HepG2 (cell line): ENCODE measurements at regions of chr3 and their contacts with region 1.

Region 1: DNA sequence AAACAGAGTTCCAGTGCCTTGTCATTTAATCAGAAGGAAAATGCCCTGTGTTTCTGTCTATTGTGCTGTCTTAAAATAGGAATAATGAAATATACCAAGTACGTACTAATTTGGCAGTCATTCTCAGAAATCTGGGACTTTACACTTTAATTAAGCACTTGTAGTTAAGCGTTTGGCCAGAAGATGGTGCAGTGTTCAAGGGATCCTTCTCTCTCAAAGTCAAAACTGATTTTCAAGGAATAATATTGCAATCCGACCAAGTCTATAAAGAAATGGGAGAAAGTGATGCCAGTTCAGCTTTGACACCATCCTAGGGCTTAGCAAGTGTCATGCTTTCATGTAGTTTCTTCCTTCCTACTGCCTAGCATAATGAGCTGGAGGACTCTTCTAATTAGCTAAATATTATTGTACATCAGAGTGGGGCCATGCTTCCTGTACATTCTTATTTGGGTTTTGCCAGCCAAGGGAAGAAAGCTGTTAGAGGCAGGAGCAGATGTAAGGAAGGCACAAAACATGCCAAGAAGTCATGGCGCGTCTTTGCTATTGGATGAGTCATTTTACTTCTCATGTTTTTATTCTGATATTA is 64.8 kb downstream of the SAMMSON start:
- DNase-seq: peak; percentile 27
- ATAC-seq: no peak
- H3K4me3 ChIP-seq: no peak overlapping the region
- H3K27ac ChIP-seq: no peak overlapping the region
- H3K4me1 ChIP-seq: no peaks in the 10 kb centered on the region
- H3K27me3 ChIP-seq: no peaks in the 10 kb centered on the region
- CTCF ChIP-seq: peak; percentile 71
- EP300 ChIP-seq: no peak
- POLR2A ChIP-seq: no peak
- RAD21 ChIP-seq: peak; percentile 45; the same call in 1 of the 2 replicates

Region 2: GRCh38 chr3:70108072-70108471 is 43.8 kb after region 1 on chr3:
- CTCF ChIA-PET with region 1: no interaction called
- POLR2A ChIA-PET with region 1: no interaction called
- in situ Hi-C with region 1: no loop called
- intact Hi-C with region 1: loop called (anchors 1 kb)
- DNase-seq: peak; percentile 18
- ATAC-seq: peak; percentile 54
- H3K4me3 ChIP-seq: no peak overlapping the region
- H3K27ac ChIP-seq: no peak overlapping the region
- H3K4me1 ChIP-seq: no peaks in the 10 kb centered on the region
- H3K27me3 ChIP-seq: no peaks in the 10 kb centered on the region
- CTCF ChIP-seq: peak; percentile 41
- EP300 ChIP-seq: no peak
- POLR2A ChIP-seq: no peak
- RAD21 ChIP-seq: no peak

Region 3: DNA sequence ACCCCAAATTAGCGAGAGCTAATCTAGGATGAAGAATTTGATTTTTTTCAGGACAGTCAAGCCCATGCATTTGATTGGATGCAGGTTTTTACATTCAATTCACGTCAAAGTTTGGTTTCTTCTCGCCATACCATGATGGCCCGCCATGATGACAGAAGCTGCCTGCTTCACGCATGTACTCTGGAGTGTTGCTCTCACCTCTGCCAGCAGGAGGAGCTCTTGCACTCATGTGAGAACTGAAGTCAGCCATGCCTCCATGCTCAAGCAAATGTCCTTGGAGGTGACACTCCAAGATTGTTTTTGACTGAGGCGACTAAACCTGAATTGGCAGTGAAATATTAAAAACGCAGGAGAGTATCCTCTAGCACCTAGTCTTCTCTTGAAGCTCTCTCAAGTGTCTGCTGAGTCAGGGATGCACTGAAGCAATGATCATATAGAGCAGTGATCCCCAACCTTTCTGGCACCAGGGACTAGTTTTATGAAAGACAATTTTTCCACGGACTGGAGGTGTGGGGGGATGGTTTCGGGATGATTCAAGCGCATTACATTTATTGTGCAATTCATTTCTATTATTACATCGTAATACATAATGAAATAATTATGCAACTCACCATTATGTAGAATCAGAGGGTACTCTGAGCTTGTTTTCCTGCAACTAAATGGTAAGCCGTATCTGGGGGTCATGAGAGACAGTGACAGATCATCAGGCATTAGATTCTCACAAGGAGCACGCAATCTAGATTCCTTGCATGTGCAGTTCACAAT is 56.3 kb after region 1 on chr3:
- CTCF ChIA-PET with region 1: no interaction called
- POLR2A ChIA-PET with region 1: no interaction called
- in situ Hi-C with region 1: no loop called
- intact Hi-C with region 1: loop called (anchors 5 kb)
- DNase-seq: peak; percentile 65
- ATAC-seq: peak; percentile 96
- H3K4me3 ChIP-seq: no peak overlapping the region
- H3K27ac ChIP-seq: no peak overlapping the region
- H3K4me1 ChIP-seq: no peaks in the 10 kb centered on the region
- H3K27me3 ChIP-seq: no peaks in the 10 kb centered on the region; a peak in 1 of 5 replicates
- CTCF ChIP-seq: peak; percentile 86
- EP300 ChIP-seq: no peak
- POLR2A ChIP-seq: no peak
- RAD21 ChIP-seq: 0 out of 2 replicates have a peak, but pooled peaks have one; percentile 35

Region 4: DNA sequence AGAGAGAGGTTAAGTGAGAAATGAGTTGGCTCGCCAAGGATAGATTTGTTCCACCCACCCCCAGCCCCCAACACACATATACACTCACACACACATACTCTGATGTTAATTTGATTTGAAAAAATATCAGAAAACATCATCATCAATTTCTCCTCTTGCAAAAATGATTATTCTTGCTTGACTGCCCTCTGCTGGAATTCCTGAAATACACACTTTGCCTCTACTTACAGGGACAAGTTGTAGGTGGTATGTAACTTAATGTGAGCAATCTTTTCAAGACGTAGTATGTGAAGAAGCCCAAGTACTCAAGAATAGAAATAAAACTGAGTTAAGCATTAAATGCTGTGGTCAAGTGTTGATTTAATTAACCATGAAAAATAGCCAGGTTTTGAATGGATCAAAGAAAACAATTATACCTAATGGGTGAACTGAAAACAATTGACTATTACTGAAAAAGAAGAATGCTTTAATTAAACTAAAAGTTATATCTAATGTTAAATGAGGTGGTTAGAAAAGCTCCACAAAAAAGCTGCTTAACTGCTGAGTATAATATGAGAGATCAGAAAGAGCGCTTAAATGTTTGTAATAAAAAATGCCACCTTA is 294.8 kb after region 1 on chr3:
- CTCF ChIA-PET with region 1: interaction called, 17 read pairs
- POLR2A ChIA-PET with region 1: no interaction called
- in situ Hi-C with region 1: loop called (anchors 10 kb)
- intact Hi-C with region 1: loop called (anchors 1 kb)
- DNase-seq: peak; percentile 2
- ATAC-seq: no peak
- H3K4me3 ChIP-seq: no peak overlapping the region
- H3K27ac ChIP-seq: no peak overlapping the region
- H3K4me1 ChIP-seq: no peaks in the 10 kb centered on the region
- H3K27me3 ChIP-seq: no peaks in the 10 kb centered on the region
- CTCF ChIP-seq: peak; percentile 62
- EP300 ChIP-seq: no peak
- POLR2A ChIP-seq: no peak
- RAD21 ChIP-seq: no peak

Region 5: GRCh38 chr3:70392227-70392626 is 327.9 kb after region 1 on chr3:
- CTCF ChIA-PET with region 1: no interaction called
- POLR2A ChIA-PET with region 1: no interaction called
- in situ Hi-C with region 1: no loop called
- intact Hi-C with region 1: no loop called
- DNase-seq: no peak
- ATAC-seq: no peak
- H3K4me3 ChIP-seq: no peak overlapping the region
- H3K27ac ChIP-seq: no peak overlapping the region
- H3K4me1 ChIP-seq: no peaks in the 10 kb centered on the region
- H3K27me3 ChIP-seq: no peaks in the 10 kb centered on the region
- CTCF ChIP-seq: no peak
- EP300 ChIP-seq: no peak
- POLR2A ChIP-seq: no peak
- RAD21 ChIP-seq: no peak